GM18951 (cell line): ENCODE measurements at regions of chr1 and their contacts with region 1.

Region 1: DNA sequence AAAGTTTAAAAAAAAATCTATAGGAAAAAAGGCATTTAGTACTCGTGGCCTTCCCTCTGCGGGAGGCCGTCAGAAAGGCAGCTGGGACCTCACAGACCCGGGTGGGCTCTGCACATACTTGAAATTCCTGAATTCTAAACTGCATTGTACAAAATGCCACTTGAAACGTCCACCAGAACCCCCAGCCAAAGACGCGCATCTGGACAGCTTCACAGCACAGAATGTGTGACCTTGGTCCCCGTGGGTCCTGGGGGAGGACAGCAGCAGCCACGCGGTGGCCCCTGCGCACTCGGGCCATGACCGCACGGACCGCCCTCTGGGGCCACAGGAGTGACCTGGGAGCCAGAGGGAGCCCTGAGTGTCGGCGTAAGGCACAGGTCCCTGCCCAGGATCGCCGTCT is 20.6 kb upstream of the MRPS14 start:
- POLR2A ChIP-seq: no peak

Region 2: GRCh38 chr1:175338387-175339135 is 294.7 kb after region 1 on chr1:
- in situ Hi-C with region 1: loop called (anchors 25 kb)
- POLR2A ChIP-seq: no peak